Cardiac septum (tissue), 1 donor: ENCODE measurements at regions of chr6 and their contacts with region 1.

Region 1: GRCh38 chr6:40894962-40895799 is 143.8 kb downstream of the UNC5CL start:
- DNase-seq: no peak

Region 2: GRCh38 chr6:40845553-40845952 is 49.6 kb before region 1 on chr6:
- intact Hi-C with region 1: no loop called
- DNase-seq: no peak

Region 3: DNA sequence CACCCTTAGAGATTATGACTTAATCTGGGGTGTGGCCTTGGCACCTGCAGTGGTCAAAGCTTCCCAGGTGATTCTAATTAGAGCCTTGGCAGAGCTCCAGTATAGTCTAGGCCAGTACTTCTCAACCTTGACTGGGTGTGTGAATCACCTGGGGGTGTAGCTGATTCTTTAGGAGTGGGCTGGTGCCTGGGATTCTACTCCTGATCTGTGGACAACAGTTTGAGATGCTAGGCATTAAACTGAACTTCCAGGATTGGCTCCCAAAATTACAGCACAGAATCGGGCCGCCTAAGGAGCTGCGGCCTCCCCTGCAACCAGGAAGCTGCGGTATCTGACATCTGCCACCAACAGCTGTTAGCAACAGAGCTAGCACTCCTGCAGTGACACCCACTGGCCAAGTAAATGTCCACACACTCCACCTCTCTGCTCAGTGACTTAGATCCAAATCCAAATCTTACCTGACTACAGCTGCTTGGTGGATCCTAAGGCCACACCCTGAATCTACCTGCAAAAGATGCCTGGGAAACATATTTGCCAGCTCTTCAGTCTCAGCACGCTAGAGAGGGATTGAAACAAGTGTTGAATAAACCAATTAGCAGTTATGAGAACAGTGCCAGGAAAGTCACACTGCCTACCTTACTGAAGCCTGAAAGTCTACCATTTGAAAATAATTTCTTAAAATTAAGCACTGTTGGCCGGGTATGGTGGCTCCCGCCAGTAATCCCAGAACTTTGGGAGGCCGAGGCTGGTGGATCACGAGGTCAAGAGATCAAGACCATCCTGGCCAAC is 17.2 kb after region 1 on chr6:
- intact Hi-C with region 1: loop called (anchors 2 kb)
- DNase-seq: no peak

Region 4: GRCh38 chr6:41066867-41067304 is 171.7 kb after region 1 on chr6:
- intact Hi-C with region 1: loop called (anchors 5 kb)
- DNase-seq: peak; percentile 85